PC-3 (cell line): ENCODE measurements at regions of chr1 and their contacts with region 1.

Region 1: GRCh38 chr1:234722904-234723720 is 113.1 kb upstream of the IRF2BP2 start:
- DNase-seq: peak; percentile 73
- ATAC-seq: peak; percentile 14
- H3K4me3 ChIP-seq: peak overlapping the region; percentile 52
- H3K27ac ChIP-seq: peak overlapping the region; percentile 99
- H3K4me1 ChIP-seq: peaks cover 57% of the 10 kb centered on the region
- H3K27me3 ChIP-seq: no peaks in the 10 kb centered on the region
- CTCF ChIP-seq: no peak

Region 2: GRCh38 chr1:234603221-234604204 is 119.6 kb before region 1 on chr1:
- CTCF ChIA-PET with region 1: interaction called, 3 read pairs
- POLR2A ChIA-PET with region 1: interaction called, 12 read pairs
- intact Hi-C with region 1: no loop called
- DNase-seq: peak; percentile 22
- ATAC-seq: no peak
- H3K4me3 ChIP-seq: peak overlapping the region; percentile 78
- H3K27ac ChIP-seq: peak overlapping the region; percentile 96
- H3K4me1 ChIP-seq: peaks cover 46% of the 10 kb centered on the region
- H3K27me3 ChIP-seq: no peaks in the 10 kb centered on the region
- CTCF ChIP-seq: no peak

Region 3: DNA sequence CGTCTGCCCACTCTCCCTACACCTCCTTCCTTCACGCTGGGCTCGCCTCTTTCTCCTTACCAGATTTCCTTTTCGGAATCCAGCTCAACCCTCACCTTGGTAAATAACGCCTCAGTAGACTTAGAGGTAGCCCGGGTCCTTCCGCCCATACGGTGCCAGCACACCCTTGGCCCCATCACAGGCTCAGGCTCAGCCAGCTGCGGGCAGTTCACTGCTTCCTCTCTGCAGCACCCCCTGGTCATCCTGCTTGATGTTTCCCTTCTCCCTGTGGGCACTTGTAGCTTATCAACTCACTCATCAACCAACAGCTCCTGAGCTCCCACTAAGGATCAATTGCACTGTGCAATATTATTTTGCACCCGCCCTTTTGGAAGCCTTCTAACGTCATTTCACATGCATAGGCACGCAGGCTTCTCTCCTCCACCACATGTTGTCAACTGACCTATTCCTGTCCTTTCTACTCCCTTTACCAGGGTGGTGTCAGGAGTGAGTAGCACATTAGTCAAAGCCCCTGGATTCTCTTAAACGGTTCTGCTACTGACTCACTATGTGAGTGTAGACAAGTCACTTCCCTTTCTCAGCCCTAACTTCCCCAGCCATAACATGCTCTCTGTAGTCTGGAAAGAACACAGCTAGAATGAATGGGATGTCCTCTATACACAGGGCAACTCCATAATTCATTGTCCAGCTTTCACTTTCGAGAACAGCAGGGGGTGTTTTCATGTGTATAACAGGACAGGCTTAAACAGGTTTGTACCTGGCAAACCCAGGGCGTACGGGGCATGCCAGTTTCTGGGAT is 66.1 kb before region 1 on chr1:
- CTCF ChIA-PET with region 1: no interaction called
- POLR2A ChIA-PET with region 1: interaction called, 3 read pairs
- intact Hi-C with region 1: loop called (anchors 2 kb)
- DNase-seq: peak; percentile 97
- ATAC-seq: peak; percentile 89
- H3K4me3 ChIP-seq: peak overlapping the region; percentile 45
- H3K27ac ChIP-seq: peak overlapping the region; percentile 95
- H3K4me1 ChIP-seq: peaks cover 54% of the 10 kb centered on the region
- H3K27me3 ChIP-seq: no peaks in the 10 kb centered on the region
- CTCF ChIP-seq: no peak

Region 4: DNA sequence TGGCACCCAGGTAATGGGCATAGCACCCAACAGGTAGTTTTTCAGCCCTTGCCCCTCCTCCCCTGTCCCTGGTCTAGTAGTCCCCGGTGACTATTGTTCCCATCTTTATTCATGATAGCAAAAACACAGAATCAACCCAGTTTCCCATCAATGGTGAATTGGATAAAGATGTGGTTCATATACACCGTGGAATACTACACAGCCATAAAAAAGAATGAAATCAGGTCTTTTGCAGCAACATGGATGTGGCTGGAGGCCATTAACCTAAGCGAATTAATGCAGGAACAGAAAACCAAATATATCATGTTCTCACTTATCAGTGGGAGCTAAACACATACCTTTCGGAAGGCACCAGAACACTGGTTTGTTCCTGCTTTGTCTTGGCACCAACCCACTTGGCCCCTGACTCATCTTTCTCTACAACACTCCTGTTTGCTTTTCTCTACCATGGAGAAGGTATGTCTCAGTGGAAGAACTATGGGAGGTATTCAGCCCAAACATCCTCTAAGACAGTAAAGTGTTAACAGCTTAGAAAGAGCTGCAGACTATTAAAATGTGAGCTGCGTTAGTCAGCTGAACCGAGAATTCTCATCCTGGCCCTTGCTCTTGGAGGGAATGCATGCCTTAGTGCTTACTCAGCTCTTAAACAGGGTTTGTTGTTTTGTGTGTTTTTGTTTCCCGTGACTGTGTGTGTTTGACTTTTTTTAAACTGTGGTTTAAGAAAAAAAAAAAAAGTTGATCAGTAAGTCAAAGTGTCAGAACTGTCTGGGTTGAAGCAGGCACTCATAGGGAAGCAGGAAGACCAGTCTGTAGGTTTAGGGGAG is 202.5 kb after region 1 on chr1:
- CTCF ChIA-PET with region 1: interaction called, 10 read pairs
- POLR2A ChIA-PET with region 1: interaction called, 5 read pairs
- intact Hi-C with region 1: no loop called
- DNase-seq: peak; percentile 96
- ATAC-seq: peak; percentile 97
- H3K4me3 ChIP-seq: no peak overlapping the region
- H3K27ac ChIP-seq: peak overlapping the region; percentile 92
- H3K4me1 ChIP-seq: peaks cover 26% of the 10 kb centered on the region
- H3K27me3 ChIP-seq: no peaks in the 10 kb centered on the region
- CTCF ChIP-seq: no peak

Region 5: DNA sequence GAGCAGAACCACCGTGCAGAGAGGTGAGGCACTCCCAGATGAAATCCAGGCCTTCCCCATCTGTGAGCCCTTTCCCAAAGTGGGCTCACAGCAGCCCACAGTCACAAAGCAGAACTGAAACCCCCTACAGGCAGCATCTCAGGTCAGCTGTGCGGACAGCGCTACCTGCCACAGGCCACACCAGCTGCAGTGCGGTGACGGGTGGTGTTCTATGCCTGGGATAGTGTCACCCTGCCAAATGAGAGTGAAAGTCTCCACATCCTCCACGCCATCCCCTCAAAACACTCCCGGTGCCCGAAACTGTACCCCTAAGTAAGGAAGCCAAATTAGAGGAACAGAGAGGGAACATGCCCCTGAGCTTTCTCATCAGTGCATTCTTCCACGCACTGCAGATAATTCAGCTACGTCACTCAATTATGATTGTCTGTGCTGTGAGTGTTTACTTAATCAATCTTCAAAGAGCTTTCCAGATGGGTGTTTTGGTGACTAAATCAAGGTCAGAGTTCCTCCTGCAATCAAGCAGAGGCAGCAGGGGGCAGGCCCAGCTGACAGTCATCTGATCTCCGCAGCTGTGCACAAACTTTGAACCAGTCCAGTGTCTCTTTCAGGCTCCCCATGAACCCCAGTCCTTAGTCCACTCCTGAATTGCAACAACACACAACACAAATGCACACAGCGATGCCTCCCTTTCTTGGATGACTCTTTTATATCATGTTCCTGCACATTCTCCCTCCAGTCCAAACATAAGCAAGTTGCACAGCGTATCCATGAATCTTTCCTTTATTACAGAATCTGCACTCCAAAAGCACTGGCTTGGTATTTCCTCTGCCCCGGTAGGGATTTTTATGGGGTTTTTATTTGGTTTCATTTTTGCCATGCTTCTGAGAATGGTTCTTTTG is 255.5 kb after region 1 on chr1:
- CTCF ChIA-PET with region 1: interaction called, 3 read pairs
- POLR2A ChIA-PET with region 1: interaction called, 15 read pairs
- intact Hi-C with region 1: loop called (anchors 2 kb)
- DNase-seq: peak; percentile 60
- ATAC-seq: peak; percentile 27
- H3K4me3 ChIP-seq: no peak overlapping the region
- H3K27ac ChIP-seq: peak overlapping the region; percentile 100
- H3K4me1 ChIP-seq: peaks cover 74% of the 10 kb centered on the region
- H3K27me3 ChIP-seq: no peaks in the 10 kb centered on the region
- CTCF ChIP-seq: no peak

Region 6: DNA sequence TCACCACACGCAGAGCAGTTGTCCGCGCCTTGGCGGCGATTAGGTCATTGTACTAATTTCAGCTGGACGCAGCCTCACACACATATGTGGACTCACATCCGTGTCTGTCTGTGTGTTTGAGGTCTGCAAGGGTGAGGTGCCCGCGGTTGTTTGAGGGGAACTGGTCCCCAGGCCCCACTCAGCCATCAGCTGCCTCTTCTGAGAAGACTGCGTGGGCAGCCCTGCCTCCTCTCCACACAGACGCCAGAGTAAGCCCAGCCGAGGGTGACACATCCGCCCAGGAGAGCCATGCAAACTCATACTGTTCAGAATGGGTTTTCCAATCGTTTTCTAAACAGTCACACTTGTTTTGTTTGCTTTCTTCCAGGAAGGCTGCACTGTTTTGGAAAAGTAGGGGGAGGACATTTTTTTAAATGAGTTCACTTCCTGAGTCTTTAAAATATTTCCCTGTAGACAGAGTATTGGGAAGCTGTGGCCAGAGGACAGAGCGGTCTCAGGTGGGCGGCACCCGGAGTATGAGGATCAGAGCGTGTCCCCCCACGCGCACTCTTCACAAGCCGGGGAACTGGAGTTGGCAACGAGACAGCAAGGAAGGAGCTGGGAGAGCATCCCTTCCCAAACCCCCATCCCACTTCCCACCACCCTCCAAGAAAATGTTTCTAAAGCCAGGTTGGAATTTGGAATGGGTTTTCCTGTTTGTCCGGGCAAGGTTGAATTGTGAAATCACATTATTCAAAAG is 352.2 kb after region 1 on chr1:
- CTCF ChIA-PET with region 1: no interaction called
- POLR2A ChIA-PET with region 1: interaction called, 5 read pairs
- intact Hi-C with region 1: loop called (anchors 2 kb)
- DNase-seq: peak; percentile 91
- ATAC-seq: peak; percentile 47
- H3K4me3 ChIP-seq: peak overlapping the region; percentile 39
- H3K27ac ChIP-seq: peak overlapping the region; percentile 100
- H3K4me1 ChIP-seq: peaks cover 81% of the 10 kb centered on the region
- H3K27me3 ChIP-seq: no peaks in the 10 kb centered on the region
- CTCF ChIP-seq: no peak